ENCODE measurements at regions of chr9 and their contacts with region 1.

Region 1: GRCh38 chr9:93064392-93065134 is 6.1 kb downstream of the SUSD3 start:
- DNase-seq: peak; percentile 57 to 96 (median 89)
- ATAC-seq: peak; percentile 87 to 94
- H3K4me3 Mint-ChIP-seq: peak overlapping the region; percentile 81 to 96 (median 89)
- H3K27ac Mint-ChIP-seq: peak overlapping the region; percentile 93 to 100 (median 100)
- H3K4me1 Mint-ChIP-seq: peaks cover 48 to 94% (median 90%) of the 10 kb centered on the region in 4 donors
- H3K27me3 Mint-ChIP-seq: no peaks in the 10 kb centered on the region

Region 2: GRCh38 chr9:92954049-92954861 is 110.3 kb before region 1 on chr9:
- POLR2A ChIA-PET with region 1: interaction called, 19 read pairs
- DNase-seq: peak; percentile 52 to 92 (median 82)
- ATAC-seq: peak; percentile 87 to 95
- H3K4me3 Mint-ChIP-seq: peak overlapping the region; percentile 74 to 93 (median 87)
- H3K27ac Mint-ChIP-seq: peak overlapping the region; percentile 82 to 99 (median 98)
- H3K4me1 Mint-ChIP-seq: peaks cover 34 to 87% (median 79%) of the 10 kb centered on the region in 4 donors
- H3K27me3 Mint-ChIP-seq: no peaks in the 10 kb centered on the region

Region 3: GRCh38 chr9:93003552-93004407 is 60.8 kb before region 1 on chr9:
- POLR2A ChIA-PET with region 1: interaction called, 16 read pairs
- DNase-seq: peak; percentile 45 to 77 (median 66)
- ATAC-seq: peak; percentile 74 to 80
- H3K4me3 Mint-ChIP-seq: peak overlapping the region; percentile 9 to 79 (median 65)
- H3K27ac Mint-ChIP-seq: peak overlapping the region; percentile 80 to 97 (median 92)
- H3K4me1 Mint-ChIP-seq: peaks cover 24 to 67% (median 52%) of the 10 kb centered on the region in 4 donors
- H3K27me3 Mint-ChIP-seq: no peaks in the 10 kb centered on the region

Region 4: GRCh38 chr9:93051680-93052089 is 12.9 kb before region 1 on chr9:
- POLR2A ChIA-PET with region 1: interaction called, 79 read pairs
- DNase-seq: peak in 1 of 10 donors; percentile 45
- ATAC-seq: no peak
- H3K4me3 Mint-ChIP-seq: peak overlapping the region in 1 of 10 donors; percentile 10
- H3K27ac Mint-ChIP-seq: peak overlapping the region in 5 of 10 donors; percentile 22 to 87 (median 54)
- H3K4me1 Mint-ChIP-seq: peaks cover 38 to 68% (median 47%) of the 10 kb centered on the region in 4 donors
- H3K27me3 Mint-ChIP-seq: peaks cover 0 to 1% (median 0%) of the 10 kb centered on the region in 5 donors

Region 5: GRCh38 chr9:93082841-93083411 is 18.4 kb after region 1 on chr9:
- POLR2A ChIA-PET with region 1: interaction called, 221 read pairs
- DNase-seq: peak in 1 of 10 donors; percentile 61
- ATAC-seq: peak; percentile 47 to 53
- H3K4me3 Mint-ChIP-seq: peak overlapping the region in 5 of 10 donors; percentile 10 to 81 (median 41)
- H3K27ac Mint-ChIP-seq: peak overlapping the region; percentile 46 to 96 (median 90)
- H3K4me1 Mint-ChIP-seq: peaks cover 9 to 43% (median 21%) of the 10 kb centered on the region in 4 donors
- H3K27me3 Mint-ChIP-seq: no peaks in the 10 kb centered on the region

Region 6: GRCh38 chr9:93108291-93109041 is 43.9 kb after region 1 on chr9:
- POLR2A ChIA-PET with region 1: interaction called, 14 read pairs
- DNase-seq: no peak
- ATAC-seq: no peak
- H3K4me3 Mint-ChIP-seq: no peak overlapping the region
- H3K27ac Mint-ChIP-seq: peak overlapping the region in 5 of 10 donors; percentile 17 to 86 (median 81)
- H3K4me1 Mint-ChIP-seq: peaks cover 18 to 65% (median 51%) of the 10 kb centered on the region in 4 donors
- H3K27me3 Mint-ChIP-seq: no peaks in the 10 kb centered on the region

Region 7: DNA sequence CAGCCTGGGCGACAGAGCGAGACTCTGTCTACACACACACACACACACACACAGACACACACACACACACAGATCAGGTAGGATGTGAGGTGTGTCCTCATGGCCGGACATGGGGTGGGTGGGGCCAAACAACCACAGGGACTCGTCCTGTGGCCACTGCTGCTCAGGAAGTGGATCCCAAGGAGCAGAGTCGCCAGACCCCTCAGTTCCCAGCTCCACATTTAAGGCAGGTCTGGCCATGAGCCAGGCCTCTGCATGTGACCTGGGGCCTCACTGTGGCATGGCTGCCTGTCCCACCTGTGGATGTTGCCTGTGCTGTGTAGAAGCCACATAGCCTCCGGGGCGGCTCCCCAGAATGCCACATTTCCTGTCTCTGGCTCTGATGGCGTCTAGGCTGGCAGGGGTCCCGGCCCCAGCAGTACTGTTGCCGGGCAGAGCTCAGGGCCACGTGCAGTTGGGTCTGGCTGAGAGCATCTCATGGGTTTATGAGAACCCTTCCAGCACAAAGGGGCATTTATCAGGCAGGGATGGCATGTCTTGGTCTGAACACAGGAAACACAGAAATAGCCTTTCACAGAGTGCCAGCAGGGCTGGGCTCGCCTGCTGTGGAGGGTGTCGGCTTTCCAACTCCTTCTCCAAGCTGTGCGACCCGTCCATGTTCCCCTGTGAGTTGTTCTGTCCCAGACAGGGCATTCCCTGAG is 79.4 kb after region 1 on chr9:
- POLR2A ChIA-PET with region 1: interaction called, 11 read pairs
- DNase-seq: peak; percentile 48 to 86 (median 75)
- ATAC-seq: peak; percentile 97 to 98
- H3K4me3 Mint-ChIP-seq: peak overlapping the region; percentile 44 to 81 (median 72)
- H3K27ac Mint-ChIP-seq: peak overlapping the region; percentile 95 to 99 (median 97)
- H3K4me1 Mint-ChIP-seq: peaks cover 18 to 69% (median 55%) of the 10 kb centered on the region in 4 donors
- H3K27me3 Mint-ChIP-seq: no peaks in the 10 kb centered on the region

Region 8: DNA sequence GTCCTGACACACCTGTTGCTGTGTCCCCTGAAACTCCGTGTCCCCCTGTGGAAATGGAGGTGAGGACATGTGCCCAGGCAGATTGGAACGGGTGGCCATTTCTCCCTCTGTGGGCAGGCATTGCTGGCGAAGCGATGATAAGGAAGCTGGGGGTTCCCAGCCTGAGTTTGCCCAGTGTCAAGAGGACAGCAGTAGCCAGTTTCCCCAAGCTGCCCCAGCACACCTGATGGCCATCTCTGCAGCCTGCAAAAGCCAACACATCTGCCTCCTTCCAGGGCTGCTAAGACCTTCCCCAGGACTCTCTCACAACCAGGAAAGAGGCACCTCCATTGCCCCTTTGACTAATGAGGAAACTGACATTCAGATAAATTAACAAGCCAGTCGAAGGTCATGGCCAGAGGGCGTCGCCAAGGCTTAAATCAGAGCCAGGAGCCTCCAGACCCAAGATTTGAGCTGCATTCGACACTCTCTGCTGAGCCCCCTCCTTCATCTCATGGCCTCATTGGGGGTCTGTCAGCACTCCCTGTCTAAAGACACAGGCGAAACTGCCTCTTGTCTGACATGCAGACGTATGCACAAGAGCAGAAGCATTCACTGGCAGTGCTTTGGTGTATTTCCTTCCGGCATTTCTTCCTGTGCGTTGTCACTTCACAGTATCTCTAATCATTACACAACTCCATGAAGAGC is 108.9 kb after region 1 on chr9:
- POLR2A ChIA-PET with region 1: no interaction called
- DNase-seq: no peak
- ATAC-seq: no peak
- H3K4me3 Mint-ChIP-seq: peak overlapping the region in 3 of 10 donors; percentile 8 to 54 (median 14)
- H3K27ac Mint-ChIP-seq: peak overlapping the region in 6 of 10 donors; percentile 12 to 67 (median 38)
- H3K4me1 Mint-ChIP-seq: peaks cover 0 to 7% (median 4%) of the 10 kb centered on the region in 4 donors
- H3K27me3 Mint-ChIP-seq: peaks cover 0 to 3% (median 2%) of the 10 kb centered on the region in 5 donors

Measured in naive thymus-derived CD8-positive, alpha-beta T cell (primary cell).